Mammary epithelial cell (primary cell): ENCODE measurements at regions of chr11 and their contacts with region 1.

Region 1: GRCh38 chr11:63945477-63946163 is 6.8 kb downstream of the NAA40 start:
- DNase-seq: peak; percentile 64
- H3K4me3 ChIP-seq: no peak overlapping the region
- H3K27ac ChIP-seq: no peak overlapping the region
- H3K4me1 ChIP-seq: peaks cover 3% of the 10 kb centered on the region
- H3K27me3 ChIP-seq: no peaks in the 10 kb centered on the region
- CTCF ChIP-seq: peak; percentile 54 to 68

Region 2: GRCh38 chr11:64185816-64186498 is 240.3 kb after region 1 on chr11 and contains the start of gene STIP1:
- CTCF ChIA-PET with region 1: interaction called, 13 read pairs
- dilution Hi-C with region 1: no loop called
- in situ Hi-C with region 1: no loop called
- intact Hi-C with region 1: no loop called
- DNase-seq: peak; percentile 100
- H3K4me3 ChIP-seq: peak within 1 kb of the TSS; percentile 45 to 72 (median 72)
- H3K27ac ChIP-seq: peak within 1 kb of the TSS; percentile 55
- H3K4me1 ChIP-seq: peaks cover 14% of the 10 kb centered on the region
- H3K27me3 ChIP-seq: no peaks in the 10 kb centered on the region
- CTCF ChIP-seq: peak in 1 of 2 donors; percentile 64
- total RNA-seq, gene STIP1: 105 to 173 TPM